ENCODE measurements at regions of chr6 and their contacts with region 1.

Region 1: GRCh38 chr6:118651282-118652050 is at the start of gene CEP85L:
- DNase-seq: peak; percentile 82
- ATAC-seq: peak; percentile 92
- H3K4me3 ChIP-seq: peak within 1 kb of the TSS; percentile 78
- H3K27ac ChIP-seq: peak within 1 kb of the TSS; percentile 48; the same call in 1 of the 2 replicates
- H3K4me1 ChIP-seq: peaks cover 8% of the 10 kb centered on the region; the same call in 1 of the 2 replicates
- H3K27me3 ChIP-seq: no peaks in the 10 kb centered on the region
- CTCF ChIP-seq: no peak
- total RNA-seq, gene CEP85L: 3.9 and 7.8 TPM in 2 replicates

Region 2: DNA sequence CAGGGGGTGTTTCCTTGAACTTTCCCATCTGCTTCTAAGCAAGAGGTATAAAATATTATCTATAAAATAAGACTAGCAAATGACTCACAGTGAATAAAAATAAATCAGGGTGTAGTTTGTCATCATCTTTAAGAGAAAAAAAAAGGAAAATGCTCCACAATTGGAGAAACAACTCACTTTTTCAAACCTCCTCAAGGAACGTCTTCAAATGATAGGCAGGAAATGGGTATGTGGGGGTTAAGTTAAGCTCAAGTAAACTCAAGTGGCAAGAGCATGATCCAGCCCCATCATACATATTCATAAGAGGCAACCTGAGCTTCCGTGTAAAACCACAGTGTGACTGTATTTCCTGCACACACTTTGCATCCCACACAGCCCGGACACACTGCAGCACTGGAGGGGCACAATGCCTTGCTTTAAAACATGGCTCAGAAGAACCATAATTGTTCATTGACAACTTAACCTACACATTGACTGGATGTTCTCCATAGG is 58.4 kb after region 1 on chr6:
- CTCF ChIA-PET with region 1: interaction called, 10 read pairs
- POLR2A ChIA-PET with region 1: interaction called, 5 read pairs
- intact Hi-C with region 1: loop called (anchors 1 kb)
- DNase-seq: peak; percentile 75
- ATAC-seq: peak; percentile 64
- H3K4me3 ChIP-seq: peak overlapping the region; percentile 66
- H3K27ac ChIP-seq: peak overlapping the region; percentile 99
- H3K4me1 ChIP-seq: peaks cover 49% of the 10 kb centered on the region
- H3K27me3 ChIP-seq: no peaks in the 10 kb centered on the region
- CTCF ChIP-seq: no peak

Region 3: GRCh38 chr6:118968416-118968815 is 316.9 kb after region 1 on chr6:
- CTCF ChIA-PET with region 1: no interaction called
- POLR2A ChIA-PET with region 1: interaction called, 12 read pairs
- intact Hi-C with region 1: no loop called
- DNase-seq: peak; percentile 37
- ATAC-seq: peak; percentile 54; the same call in 1 of the 2 replicates
- H3K4me3 ChIP-seq: no peak overlapping the region
- H3K27ac ChIP-seq: no peak overlapping the region
- H3K4me1 ChIP-seq: no peaks in the 10 kb centered on the region
- H3K27me3 ChIP-seq: no peaks in the 10 kb centered on the region
- CTCF ChIP-seq: peak; percentile 46; the same call in 1 of the 2 replicates

Measured in PC-3 (cell line).